GM12878 (cell line): ENCODE measurements at regions of chr13 and their contacts with region 1.

Region 1: GRCh38 chr13:48580185-48580803 is 47.4 kb upstream of the RCBTB2 start:
- DNase-seq: no peak
- ATAC-seq: peak; percentile 46
- H3K4me3 ChIP-seq: no peak overlapping the region
- H3K27ac ChIP-seq: no peak overlapping the region; the same call in 1 of the 2 replicates
- H3K4me1 ChIP-seq: peaks cover 39% of the 10 kb centered on the region
- H3K27me3 ChIP-seq: no peaks in the 10 kb centered on the region
- CTCF ChIP-seq: peak; percentile 63 to 72 (median 64); a peak in 5 of 6 replicates
- EP300 ChIP-seq: no peak
- POLR2A ChIP-seq: no peak
- RAD21 ChIP-seq: peak; percentile 90

Region 2: GRCh38 chr13:48037346-48038173 is 542.7 kb before region 1 on chr13 and contains the start of gene NUDT15:
- CTCF ChIA-PET with region 1: interaction called, 10 read pairs
- POLR2A ChIA-PET with region 1: no interaction called
- RAD21 ChIA-PET with region 1: interaction called, 8 read pairs
- SMC1A ChIA-PET with region 1: interaction called, 6 read pairs
- in situ Hi-C with region 1: no loop called
- intact Hi-C with region 1: no loop called
- DNase-seq: peak; percentile 96
- ATAC-seq: peak; percentile 94
- H3K4me3 ChIP-seq: peak within 1 kb of the TSS; percentile 85
- H3K27ac ChIP-seq: peak within 1 kb of the TSS; percentile 95
- H3K4me1 ChIP-seq: peaks cover 8% of the 10 kb centered on the region
- H3K27me3 ChIP-seq: no peaks in the 10 kb centered on the region
- CTCF ChIP-seq: peak; percentile 99 to 100 (median 99)
- EP300 ChIP-seq: peak in 1 of 2 experiments; percentile 16; a peak in 3 of 4 replicates
- POLR2A ChIP-seq: peak; percentile 100
- RAD21 ChIP-seq: peak; percentile 47; the same call in 1 of the 2 replicates
- polyA plus RNA-seq, gene NUDT15: 11.4 to 17.7 TPM

Region 3: GRCh38 chr13:48233046-48233907 is 347.0 kb before region 1 on chr13 and contains the start of gene ITM2B:
- CTCF ChIA-PET with region 1: interaction called, 17 read pairs
- POLR2A ChIA-PET with region 1: interaction called, 4 read pairs
- RAD21 ChIA-PET with region 1: interaction called, 5 read pairs
- SMC1A ChIA-PET with region 1: interaction called, 8 read pairs
- in situ Hi-C with region 1: no loop called
- intact Hi-C with region 1: loop called (anchors 5 kb)
- DNase-seq: no peak
- ATAC-seq: peak; percentile 79
- H3K4me3 ChIP-seq: peak within 1 kb of the TSS; percentile 86
- H3K27ac ChIP-seq: no peak within 1 kb of the TSS
- H3K4me1 ChIP-seq: peaks cover 8% of the 10 kb centered on the region
- H3K27me3 ChIP-seq: peaks cover 6 to 8% of the 10 kb centered on the region in 2 experiments
- CTCF ChIP-seq: peak; percentile 39 to 55 (median 45); a peak in 5 of 6 replicates
- EP300 ChIP-seq: no peak
- POLR2A ChIP-seq: peak; percentile 57; the same call in 1 of the 2 replicates
- RAD21 ChIP-seq: 0 out of 2 replicates have a peak, but pooled peaks have one; percentile 24
- polyA plus RNA-seq, gene ITM2B: 3.3 to 5.0 TPM

Region 4: DNA sequence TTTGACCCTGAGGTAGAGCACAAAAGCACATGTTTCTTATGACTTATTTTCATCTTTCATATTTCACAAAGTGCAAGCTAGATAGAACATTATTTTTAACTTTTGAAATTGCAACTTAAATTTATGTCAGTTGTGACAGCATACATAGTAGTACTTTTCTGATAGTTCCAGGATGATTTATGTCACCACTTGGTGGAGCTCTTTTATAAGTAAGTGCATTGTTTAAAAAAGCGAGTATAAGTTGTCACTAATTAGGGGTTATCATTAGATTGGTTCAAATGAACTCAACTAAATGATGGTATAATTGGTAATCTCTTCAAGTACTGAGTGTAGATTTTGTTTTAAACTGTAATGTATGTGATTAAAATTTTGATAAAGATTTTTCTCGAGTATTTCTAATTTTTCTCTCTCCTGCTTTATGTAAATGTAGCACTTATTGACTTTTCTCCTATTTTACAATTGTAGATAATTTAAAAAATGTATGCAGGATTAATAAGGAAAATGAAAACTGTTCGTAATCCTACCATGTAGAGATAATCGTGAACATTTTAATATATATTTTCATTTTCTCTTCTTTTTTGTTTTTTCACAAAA is 245.7 kb before region 1 on chr13:
- CTCF ChIA-PET with region 1: interaction called, 191 read pairs
- POLR2A ChIA-PET with region 1: no interaction called
- RAD21 ChIA-PET with region 1: interaction called, 141 read pairs
- SMC1A ChIA-PET with region 1: interaction called, 131 read pairs
- in situ Hi-C with region 1: loop called (anchors 5 kb)
- intact Hi-C with region 1: loop called (anchors 1 kb)
- DNase-seq: peak; percentile 24
- ATAC-seq: peak; percentile 86
- H3K4me3 ChIP-seq: no peak overlapping the region
- H3K27ac ChIP-seq: no peak overlapping the region
- H3K4me1 ChIP-seq: no peaks in the 10 kb centered on the region; the same call in 1 of the 2 replicates
- H3K27me3 ChIP-seq: no peaks in the 10 kb centered on the region
- CTCF ChIP-seq: peak; percentile 44 to 60 (median 50); a peak in 5 of 6 replicates
- EP300 ChIP-seq: no peak
- POLR2A ChIP-seq: no peak
- RAD21 ChIP-seq: peak; percentile 92

Region 5: DNA sequence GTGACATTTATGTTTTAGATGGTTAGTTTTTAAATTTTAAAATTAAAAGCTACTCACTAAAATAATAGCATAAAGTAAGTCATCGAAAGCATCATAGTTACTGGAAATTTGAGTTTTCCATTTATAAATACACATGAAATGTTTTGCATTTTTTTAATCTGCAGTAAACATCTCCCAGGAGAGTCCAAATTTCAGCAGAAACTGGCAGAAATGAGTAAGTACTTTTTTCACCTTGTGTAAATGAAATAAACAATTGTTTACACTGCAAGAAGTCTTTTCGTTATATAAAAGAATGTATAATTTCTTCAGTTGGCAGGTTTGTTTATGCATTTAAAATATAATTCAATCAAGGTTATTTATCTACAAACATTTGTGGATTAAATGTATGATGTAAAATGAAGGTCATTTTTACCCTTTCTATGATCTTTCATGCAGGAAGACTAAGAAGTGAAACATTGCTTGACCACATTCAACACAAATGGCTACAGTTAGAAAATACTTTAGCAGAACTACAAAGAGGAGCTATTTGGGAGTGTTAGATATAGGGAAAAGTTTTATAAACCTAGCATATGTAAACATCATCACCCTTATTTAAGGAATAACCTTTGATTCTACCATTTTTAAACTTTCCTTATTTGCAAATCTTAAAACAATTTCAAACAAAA is 103.0 kb before region 1 on chr13:
- CTCF ChIA-PET with region 1: interaction called, 3 read pairs
- POLR2A ChIA-PET with region 1: no interaction called
- RAD21 ChIA-PET with region 1: interaction called, 10 read pairs
- SMC1A ChIA-PET with region 1: interaction called, 11 read pairs
- in situ Hi-C with region 1: no loop called
- intact Hi-C with region 1: no loop called
- DNase-seq: no peak
- ATAC-seq: peak; percentile 86
- H3K4me3 ChIP-seq: no peak overlapping the region
- H3K27ac ChIP-seq: peak overlapping the region; percentile 33
- H3K4me1 ChIP-seq: peaks cover 22% of the 10 kb centered on the region; the same call in 1 of the 2 replicates
- H3K27me3 ChIP-seq: no peaks in the 10 kb centered on the region
- CTCF ChIP-seq: no peak
- EP300 ChIP-seq: no peak
- POLR2A ChIP-seq: no peak
- RAD21 ChIP-seq: no peak

Region 6: DNA sequence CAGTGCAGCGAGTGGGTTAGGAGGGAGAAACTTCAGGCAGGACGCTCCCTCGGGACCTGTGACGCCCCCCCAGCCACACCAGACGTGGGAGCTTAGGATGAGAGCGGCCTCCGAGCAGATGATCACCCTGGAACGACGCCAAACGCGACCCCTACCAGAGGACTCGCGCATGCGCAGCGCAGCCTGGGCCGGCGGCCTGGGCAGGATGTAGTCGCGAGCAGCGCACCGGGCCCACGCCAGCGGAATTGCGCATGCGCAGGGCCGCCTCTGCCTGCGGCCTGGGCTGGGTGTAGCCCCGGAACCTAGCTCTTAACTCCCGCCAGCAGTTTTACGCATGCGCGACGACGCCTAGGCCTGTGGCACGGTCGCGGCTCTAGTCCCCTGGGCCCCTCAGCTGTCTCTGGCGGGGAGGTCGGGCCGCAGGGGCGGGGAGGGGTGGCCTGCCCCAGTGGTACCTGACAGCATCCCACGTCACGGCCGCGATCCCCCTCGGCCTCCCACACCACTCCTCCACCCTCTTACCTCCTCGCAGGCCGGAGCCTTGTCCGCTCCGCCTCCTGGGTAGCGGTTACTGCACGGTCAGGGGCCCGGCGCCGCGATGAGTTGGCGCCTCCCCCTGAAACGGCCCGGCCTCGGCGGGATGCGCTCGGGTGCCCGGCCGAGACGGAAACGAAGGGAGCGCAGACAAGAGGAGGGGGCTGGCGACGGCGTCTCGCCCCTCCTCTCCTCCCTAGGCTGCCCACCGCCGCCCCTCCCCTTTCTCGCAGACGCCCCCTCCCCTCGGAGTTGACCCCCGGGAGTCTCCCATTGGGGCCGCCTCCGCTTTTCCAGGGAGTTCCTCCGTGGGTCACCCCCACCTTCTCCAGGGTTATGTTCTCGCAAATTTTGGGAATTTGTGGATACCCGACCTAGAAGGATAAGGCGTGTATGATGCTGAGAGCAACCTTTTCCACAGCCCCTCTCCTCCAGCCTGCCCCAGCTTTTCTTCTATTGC is 47.5 kb before region 1 on chr13 and contains the start of gene RCBTB2:
- CTCF ChIA-PET with region 1: interaction called, 11 read pairs
- POLR2A ChIA-PET with region 1: interaction called, 4 read pairs
- RAD21 ChIA-PET with region 1: interaction called, 30 read pairs
- SMC1A ChIA-PET with region 1: interaction called, 27 read pairs
- in situ Hi-C with region 1: no loop called
- intact Hi-C with region 1: loop called (anchors 1 kb)
- DNase-seq: peak; percentile 95
- ATAC-seq: peak; percentile 90
- H3K4me3 ChIP-seq: peak within 1 kb of the TSS; percentile 77
- H3K27ac ChIP-seq: peak within 1 kb of the TSS; percentile 93
- H3K4me1 ChIP-seq: peaks cover 29% of the 10 kb centered on the region
- H3K27me3 ChIP-seq: no peaks in the 10 kb centered on the region
- CTCF ChIP-seq: no peak
- EP300 ChIP-seq: no peak
- POLR2A ChIP-seq: peak; percentile 90
- RAD21 ChIP-seq: no peak
- polyA plus RNA-seq, gene RCBTB2: 8.7 to 10.4 TPM

Region 7: GRCh38 chr13:48769107-48769704 is 188.9 kb after region 1 on chr13:
- CTCF ChIA-PET with region 1: interaction called, 35 read pairs
- POLR2A ChIA-PET with region 1: no interaction called
- RAD21 ChIA-PET with region 1: interaction called, 28 read pairs
- SMC1A ChIA-PET with region 1: interaction called, 9 read pairs
- in situ Hi-C with region 1: no loop called
- intact Hi-C with region 1: no loop called
- DNase-seq: peak; percentile 68
- ATAC-seq: peak; percentile 98
- H3K4me3 ChIP-seq: no peak overlapping the region
- H3K27ac ChIP-seq: no peak overlapping the region
- H3K4me1 ChIP-seq: no peaks in the 10 kb centered on the region
- H3K27me3 ChIP-seq: no peaks in the 10 kb centered on the region; a peak in 1 of 4 replicates
- CTCF ChIP-seq: peak; percentile 97 to 100 (median 99); a peak in 5 of 6 replicates
- EP300 ChIP-seq: no peak
- POLR2A ChIP-seq: no peak
- RAD21 ChIP-seq: peak; percentile 100